Activated CD4-positive, alpha-beta memory T cell treated with anti-CD3 and anti-CD28 coated beads for 36 hours (primary cell): ENCODE measurements at regions of chr2 and their contacts with region 1.

Region 1: GRCh38 chr2:233353769-233354499 is at the start of gene DGKD:
- DNase-seq: peak; percentile 84
- H3K4me3 Mint-ChIP-seq: peak within 1 kb of the TSS; percentile 83
- H3K27ac Mint-ChIP-seq: peak within 1 kb of the TSS; percentile 80
- H3K4me1 Mint-ChIP-seq: peaks cover 57% of the 10 kb centered on the region
- H3K27me3 Mint-ChIP-seq: no peaks in the 10 kb centered on the region
- total RNA-seq, gene DGKD: 44.2 to 46.4 TPM

Region 2: DNA sequence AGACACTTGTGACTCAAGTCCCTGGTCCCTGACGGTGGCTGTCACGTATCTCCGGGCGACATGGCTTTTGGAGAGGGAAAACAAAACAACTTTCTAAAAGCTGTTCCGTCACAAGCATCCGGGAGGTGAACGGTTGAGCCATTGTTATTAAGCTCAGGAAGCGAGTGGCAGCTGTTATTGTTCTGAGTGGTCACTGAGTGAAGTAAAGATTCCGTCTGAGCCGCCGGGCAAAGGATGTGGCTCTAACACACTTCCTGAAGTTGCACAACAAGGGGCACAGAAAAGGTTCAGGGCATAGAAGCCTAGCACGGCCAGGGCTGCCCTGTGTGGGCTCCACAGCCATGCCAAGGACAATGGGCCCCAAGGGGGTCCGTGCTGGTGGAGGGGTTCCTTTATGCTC is 269.4 kb before region 1 on chr2:
- CTCF ChIA-PET with region 1: no interaction called
- POLR2A ChIA-PET with region 1: no interaction called
- intact Hi-C with region 1: loop called (anchors 10 kb)
- DNase-seq: peak; percentile 83
- H3K4me3 Mint-ChIP-seq: peak overlapping the region; percentile 70
- H3K27ac Mint-ChIP-seq: peak overlapping the region; percentile 98
- H3K4me1 Mint-ChIP-seq: peaks cover 84% of the 10 kb centered on the region
- H3K27me3 Mint-ChIP-seq: no peaks in the 10 kb centered on the region

Region 3: DNA sequence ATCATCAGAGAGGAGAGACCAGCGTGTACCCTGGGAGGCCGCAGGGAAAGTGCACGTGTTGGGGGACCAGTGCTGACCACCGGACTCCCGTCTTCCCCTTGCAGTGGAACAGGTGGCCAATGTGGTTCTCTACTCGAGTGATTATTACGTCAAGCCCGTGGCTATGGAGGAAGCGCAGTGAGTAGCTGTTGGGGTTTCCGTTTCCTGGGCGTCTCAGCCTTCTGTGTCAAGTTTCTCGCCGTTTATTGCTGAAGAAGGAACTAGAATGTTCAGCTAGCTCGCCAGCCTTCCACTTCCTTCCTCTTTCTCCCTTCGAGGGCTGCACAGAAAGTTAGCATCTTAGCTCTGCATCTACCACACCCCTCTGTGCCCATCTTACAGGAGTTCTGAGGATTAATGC is 22.4 kb before region 1 on chr2:
- CTCF ChIA-PET with region 1: interaction called, 11 read pairs
- POLR2A ChIA-PET with region 1: interaction called, 3 read pairs
- intact Hi-C with region 1: no loop called
- DNase-seq: peak; percentile 81
- H3K4me3 Mint-ChIP-seq: peak overlapping the region; percentile 1
- H3K27ac Mint-ChIP-seq: peak overlapping the region; percentile 88
- H3K4me1 Mint-ChIP-seq: peaks cover 31% of the 10 kb centered on the region
- H3K27me3 Mint-ChIP-seq: no peaks in the 10 kb centered on the region

Region 4: GRCh38 chr2:233413559-233414272 is 59.8 kb after region 1 on chr2:
- CTCF ChIA-PET with region 1: no interaction called
- POLR2A ChIA-PET with region 1: no interaction called
- intact Hi-C with region 1: loop called (anchors 5 kb)
- DNase-seq: peak; percentile 74
- H3K4me3 Mint-ChIP-seq: no peak overlapping the region
- H3K27ac Mint-ChIP-seq: peak overlapping the region; percentile 71
- H3K4me1 Mint-ChIP-seq: peaks cover 85% of the 10 kb centered on the region
- H3K27me3 Mint-ChIP-seq: no peaks in the 10 kb centered on the region

Region 5: GRCh38 chr2:233443468-233444183 is 89.7 kb after region 1 on chr2:
- CTCF ChIA-PET with region 1: interaction called, 14 read pairs
- POLR2A ChIA-PET with region 1: no interaction called
- intact Hi-C with region 1: loop called (anchors 5 kb)
- DNase-seq: peak; percentile 88
- H3K4me3 Mint-ChIP-seq: no peak overlapping the region
- H3K27ac Mint-ChIP-seq: no peak overlapping the region
- H3K4me1 Mint-ChIP-seq: peaks cover 9% of the 10 kb centered on the region
- H3K27me3 Mint-ChIP-seq: no peaks in the 10 kb centered on the region

Region 6: DNA sequence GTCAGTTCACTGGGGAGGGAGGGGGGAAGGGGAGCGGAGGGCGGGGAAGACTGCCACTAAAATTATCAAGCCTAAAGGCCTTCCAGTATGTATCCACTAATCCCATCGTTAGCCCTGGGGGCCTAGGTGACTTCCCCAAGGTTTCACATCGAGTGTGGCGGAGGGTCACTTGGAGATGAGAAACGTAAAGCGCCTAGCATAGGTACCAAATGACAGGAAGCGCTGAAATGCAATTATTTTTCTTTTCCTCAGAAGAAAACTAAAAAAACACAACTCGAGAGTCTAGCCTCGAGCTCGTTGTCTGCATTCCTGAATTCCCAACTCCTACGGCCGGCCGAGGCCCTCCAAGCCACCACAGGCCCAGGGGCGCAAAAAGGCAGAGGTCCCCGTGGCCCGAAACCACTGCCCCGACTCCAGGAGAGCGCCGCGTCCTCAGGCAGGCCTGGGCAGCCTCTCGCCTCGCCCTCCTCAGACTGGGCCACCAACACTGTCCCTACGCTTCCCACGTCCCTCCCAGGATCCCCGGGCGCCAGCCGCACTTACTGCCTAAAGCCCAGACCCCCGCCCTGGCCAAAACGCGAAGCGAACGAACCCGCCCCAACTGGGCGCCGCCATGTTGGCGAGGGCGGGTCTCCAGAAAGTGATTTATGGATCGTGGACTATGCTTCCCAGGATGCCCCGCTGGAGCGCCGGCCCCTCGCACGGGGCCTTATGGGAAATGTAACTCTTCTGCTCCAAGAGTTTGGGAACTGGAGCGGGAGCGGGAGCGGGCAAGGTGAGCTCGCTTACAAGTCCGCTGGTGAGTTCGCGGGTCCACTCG is 212.4 kb after region 1 on chr2 and contains the start of gene USP40:
- CTCF ChIA-PET with region 1: no interaction called
- POLR2A ChIA-PET with region 1: no interaction called
- intact Hi-C with region 1: loop called (anchors 1 kb)
- DNase-seq: peak; percentile 72
- H3K4me3 Mint-ChIP-seq: peak within 1 kb of the TSS; percentile 98
- H3K27ac Mint-ChIP-seq: peak within 1 kb of the TSS; percentile 91
- H3K4me1 Mint-ChIP-seq: peaks cover 13% of the 10 kb centered on the region
- H3K27me3 Mint-ChIP-seq: no peaks in the 10 kb centered on the region
- total RNA-seq, gene USP40: 19.3 to 21.5 TPM